ENCODE measurements at regions of chr17 and their contacts with region 1.

Region 1: GRCh38 chr17:29124117-29124924 is 55.9 kb downstream of the MYO18A start:
- DNase-seq: peak; percentile 83
- H3K4me3 Mint-ChIP-seq: no peak overlapping the region
- H3K27ac Mint-ChIP-seq: peak overlapping the region; percentile 82
- H3K4me1 Mint-ChIP-seq: peaks cover 13% of the 10 kb centered on the region
- H3K27me3 Mint-ChIP-seq: no peaks in the 10 kb centered on the region
- CTCF ChIP-seq: peak; percentile 77

Region 2: DNA sequence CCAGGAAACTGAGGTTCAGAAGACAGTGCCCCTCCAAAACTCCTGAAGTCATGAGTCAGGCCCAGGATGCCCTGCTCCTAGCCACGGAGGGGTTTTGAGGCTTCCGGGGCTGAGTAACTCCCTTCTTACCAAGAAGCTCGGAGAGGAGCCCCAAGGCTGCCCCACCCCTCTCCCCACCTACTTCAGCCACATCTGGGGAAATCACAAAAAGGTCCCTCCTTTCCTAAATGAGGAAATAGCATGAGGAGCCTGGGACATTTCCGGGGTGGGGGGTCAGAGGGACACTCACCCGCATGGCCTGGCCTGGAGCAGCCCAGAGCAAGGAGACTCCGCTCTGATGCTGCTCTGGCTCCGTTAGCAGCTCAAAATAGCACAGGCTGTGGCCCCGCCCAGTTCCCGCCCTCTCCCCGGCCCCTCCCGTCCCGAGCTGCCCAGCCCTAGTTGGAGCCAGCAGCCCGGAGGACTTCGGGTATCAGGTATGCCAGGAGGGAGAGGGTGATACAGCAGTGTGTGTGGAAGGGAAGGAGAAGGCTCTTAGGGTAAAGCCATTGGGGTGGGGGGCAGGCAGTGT is 15.8 kb after region 1 on chr17:
- CTCF ChIA-PET with region 1: interaction called, 66 read pairs
- POLR2A ChIA-PET with region 1: interaction called, 6 read pairs
- intact Hi-C with region 1: loop called (anchors 1 kb)
- DNase-seq: peak; percentile 73
- H3K4me3 Mint-ChIP-seq: no peak overlapping the region
- H3K27ac Mint-ChIP-seq: no peak overlapping the region
- H3K4me1 Mint-ChIP-seq: peaks cover 28% of the 10 kb centered on the region
- H3K27me3 Mint-ChIP-seq: no peaks in the 10 kb centered on the region
- CTCF ChIP-seq: no peak